ENCODE measurements at regions of chr19 and their contacts with region 1.

Region 1: DNA sequence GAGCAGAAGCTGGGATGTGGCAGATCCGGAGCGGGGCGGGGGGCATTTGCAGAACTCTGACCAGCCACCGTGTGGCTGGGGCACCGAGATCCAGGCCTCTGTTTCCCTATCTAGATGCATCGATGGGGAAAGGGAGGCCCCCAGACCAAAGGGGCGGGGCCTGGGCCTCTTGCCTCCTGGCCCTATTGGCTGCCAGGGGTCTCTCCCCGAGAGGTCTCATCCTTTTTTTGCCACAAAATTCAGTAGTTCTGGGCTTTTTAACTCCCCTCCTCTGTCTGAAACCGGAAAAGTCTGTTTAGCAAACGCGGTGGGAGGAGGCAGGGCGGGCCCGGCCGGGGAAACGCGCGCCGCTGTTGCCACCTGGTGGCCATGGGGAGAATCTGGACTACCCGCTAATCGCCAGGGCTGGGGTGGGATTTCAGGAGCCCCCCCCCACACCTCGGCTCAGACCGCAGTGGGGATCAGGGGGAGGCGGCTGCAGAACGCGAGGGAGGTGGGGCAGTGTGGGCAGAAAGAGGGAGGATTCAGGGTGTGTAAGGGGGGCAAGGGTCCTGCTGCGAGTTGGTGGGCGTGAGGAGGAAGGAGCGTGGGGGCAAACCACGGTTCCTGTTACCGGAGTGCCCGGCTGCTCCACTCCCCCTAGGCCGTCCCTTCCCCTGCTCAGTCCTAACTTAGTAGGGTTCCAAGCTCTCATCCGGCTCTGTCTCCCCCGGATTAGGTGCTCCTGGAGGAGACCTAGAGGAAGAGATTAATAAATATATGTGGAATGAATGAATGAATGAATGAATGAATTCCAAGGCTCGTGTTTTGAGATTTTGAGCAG is 28.3 kb downstream of the IL12RB1 start:
- DNase-seq: peak; percentile 94
- H3K4me3 ChIP-seq: peak overlapping the region; percentile 24 to 51; a peak in 2 of 4 replicates
- H3K27ac ChIP-seq: peak overlapping the region in 1 of 2 experiments; percentile 48; a peak in 2 of 4 replicates
- H3K4me1 ChIP-seq: peaks cover 3 to 5% of the 10 kb centered on the region in 2 experiments; a peak in 2 of 4 replicates
- H3K27me3 ChIP-seq: no peaks in the 10 kb centered on the region
- CTCF ChIP-seq: peak; percentile 97
- EP300 ChIP-seq: no peak
- RAD21 ChIP-seq: peak; percentile 88

Region 2: GRCh38 chr19:18029617-18030338 is 28.6 kb before region 1 on chr19:
- CTCF ChIA-PET with region 1: interaction called, 10 read pairs
- POLR2A ChIA-PET with region 1: no interaction called
- DNase-seq: peak; percentile 66
- H3K4me3 ChIP-seq: no peak overlapping the region
- H3K27ac ChIP-seq: no peak overlapping the region
- H3K4me1 ChIP-seq: peaks cover 6 to 7% of the 10 kb centered on the region in 2 experiments; a peak in 3 of 4 replicates
- H3K27me3 ChIP-seq: no peaks in the 10 kb centered on the region
- CTCF ChIP-seq: no peak
- EP300 ChIP-seq: no peak
- RAD21 ChIP-seq: no peak

Region 3: DNA sequence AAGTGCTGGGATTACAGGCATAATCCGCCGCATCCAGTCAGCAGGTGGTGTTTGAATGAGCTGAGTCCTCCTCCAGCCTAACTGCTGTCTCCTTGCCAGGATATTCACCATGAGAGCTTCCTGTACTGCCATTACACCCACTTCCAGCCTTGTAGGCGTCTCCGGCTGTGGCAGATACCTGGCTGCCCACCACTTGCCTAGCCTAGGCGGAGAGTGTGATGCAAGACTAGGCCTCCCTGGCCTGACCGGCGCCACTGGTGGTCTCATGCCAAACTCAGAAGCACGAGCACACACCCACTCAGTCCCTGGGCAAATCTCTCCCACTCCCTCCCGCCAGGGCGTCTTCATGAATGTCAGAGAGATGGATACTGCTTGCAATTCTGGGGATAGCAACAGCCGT is 11.8 kb after region 1 on chr19:
- CTCF ChIA-PET with region 1: interaction called, 10 read pairs
- POLR2A ChIA-PET with region 1: no interaction called
- DNase-seq: peak; percentile 6
- H3K4me3 ChIP-seq: no peak overlapping the region
- H3K27ac ChIP-seq: no peak overlapping the region
- H3K4me1 ChIP-seq: no peaks in the 10 kb centered on the region
- H3K27me3 ChIP-seq: no peaks in the 10 kb centered on the region
- CTCF ChIP-seq: no peak
- EP300 ChIP-seq: no peak
- RAD21 ChIP-seq: no peak

Region 4: GRCh38 chr19:18097217-18097992 is 39.0 kb after region 1 on chr19 and contains the start of gene MAST3:
- CTCF ChIA-PET with region 1: no interaction called
- POLR2A ChIA-PET with region 1: no interaction called
- DNase-seq: peak; percentile 100
- H3K4me3 ChIP-seq: peak within 1 kb of the TSS; percentile 59 to 89
- H3K27ac ChIP-seq: no peak within 1 kb of the TSS; a peak in 1 of 4 replicates
- H3K4me1 ChIP-seq: peaks cover 4 to 10% of the 10 kb centered on the region in 2 experiments; a peak in 2 of 4 replicates
- H3K27me3 ChIP-seq: no peaks in the 10 kb centered on the region
- CTCF ChIP-seq: no peak
- EP300 ChIP-seq: no peak
- RAD21 ChIP-seq: no peak
- polyA plus RNA-seq, gene MAST3: 3.1 and 4.5 TPM in 2 replicates

Measured in SK-N-SH (cell line).